Breast epithelium (tissue), 4 donors: ENCODE measurements at regions of chr5 and their contacts with region 1.

Region 1: GRCh38 chr5:96288166-96288844 is 144.7 kb downstream of the PCSK1 start:
- DNase-seq: no peak
- H3K4me3 ChIP-seq: no peak overlapping the region
- H3K27ac ChIP-seq: no peak overlapping the region
- H3K4me1 ChIP-seq: no peaks in the 10 kb centered on the region
- H3K27me3 ChIP-seq: no peaks in the 10 kb centered on the region
- CTCF ChIP-seq: no peak
- POLR2A ChIP-seq: no peak

Region 2: DNA sequence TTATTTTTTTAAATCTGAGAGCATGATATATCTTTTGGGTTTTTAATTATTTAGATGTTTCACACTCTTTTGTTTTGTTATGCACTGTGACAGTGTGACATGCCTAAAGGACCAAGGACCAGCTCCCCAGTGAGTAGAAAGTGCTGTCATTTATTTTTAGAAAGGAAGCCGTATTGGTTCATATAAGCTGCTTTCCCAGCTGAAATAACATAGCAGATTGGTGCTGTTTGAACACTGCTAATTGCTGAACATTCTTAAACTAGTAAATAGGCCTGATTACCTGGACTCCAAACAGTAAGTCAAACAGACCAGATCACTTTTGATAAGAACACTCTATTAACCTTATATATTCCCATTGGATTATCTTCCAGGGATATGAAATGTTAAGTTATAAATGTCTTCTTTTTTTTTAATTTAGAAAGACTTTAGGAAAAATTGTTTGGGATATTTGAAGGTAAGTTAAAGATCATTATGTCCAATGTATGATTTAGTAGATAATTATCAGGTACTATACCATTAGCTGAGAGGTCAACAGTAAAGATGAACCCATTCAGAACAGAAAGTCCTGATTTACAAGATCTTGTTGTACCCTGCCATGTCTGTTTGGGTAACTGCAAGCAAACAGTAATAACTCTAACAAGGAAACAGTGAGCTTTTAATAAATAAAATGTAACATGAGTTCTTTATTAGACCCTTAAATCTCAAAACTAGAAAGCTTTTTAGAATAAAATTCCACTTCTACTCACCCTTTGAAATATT is 298.8 kb before region 1 on chr5:
- intact Hi-C with region 1: loop called (anchors 5 kb)
- DNase-seq: no peak
- H3K4me3 ChIP-seq: no peak overlapping the region
- H3K27ac ChIP-seq: no peak overlapping the region
- H3K4me1 ChIP-seq: no peaks in the 10 kb centered on the region
- H3K27me3 ChIP-seq: no peaks in the 10 kb centered on the region
- CTCF ChIP-seq: no peak
- POLR2A ChIP-seq: no peak

Region 3: DNA sequence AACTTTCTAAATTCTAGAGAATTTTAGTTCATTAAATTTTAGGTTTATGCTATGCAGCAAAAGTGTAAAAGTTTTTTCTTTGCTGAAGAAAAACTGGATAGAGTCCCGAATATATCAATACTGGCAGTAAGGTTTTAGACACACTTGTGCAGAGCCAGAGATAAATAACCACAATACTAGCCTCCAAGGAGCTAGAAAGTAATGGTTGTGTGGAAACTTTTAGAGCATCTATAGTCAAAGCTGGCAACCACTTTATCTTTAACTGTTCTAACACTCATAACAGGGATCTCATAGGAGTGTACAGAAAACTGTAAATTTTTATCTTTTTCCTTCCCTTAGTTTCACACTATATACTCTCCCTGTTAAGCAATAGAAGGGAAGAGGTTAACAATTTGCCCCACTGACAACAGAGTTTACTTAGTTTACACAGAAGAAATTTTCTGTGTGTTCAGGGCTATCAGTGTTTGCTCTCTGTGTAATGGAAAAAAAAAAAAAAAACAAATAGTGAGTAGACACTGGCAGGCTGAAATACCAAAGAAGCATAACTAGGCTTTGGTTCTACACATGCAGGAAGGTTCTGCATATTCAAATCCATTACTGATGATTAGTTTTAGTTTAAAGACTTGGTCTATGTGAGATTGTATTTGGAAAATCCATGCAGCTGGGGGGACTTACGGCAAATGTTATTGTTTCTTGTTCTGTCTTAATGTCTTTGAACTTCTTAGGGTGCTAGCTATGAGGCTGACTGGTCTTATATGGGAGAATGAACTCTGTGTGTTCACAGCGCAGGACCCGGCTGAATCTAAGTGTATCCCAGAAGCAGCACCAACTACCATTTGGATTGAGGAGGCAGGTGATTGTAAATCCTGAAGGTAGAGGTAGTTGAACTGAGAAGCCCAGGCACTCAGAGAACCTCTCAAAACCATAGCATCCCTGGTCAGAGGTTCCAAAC is 42.9 kb before region 1 on chr5:
- intact Hi-C with region 1: no loop called
- DNase-seq: no peak
- H3K4me3 ChIP-seq: no peak overlapping the region
- H3K27ac ChIP-seq: no peak overlapping the region
- H3K4me1 ChIP-seq: no peaks in the 10 kb centered on the region
- H3K27me3 ChIP-seq: no peaks in the 10 kb centered on the region
- CTCF ChIP-seq: no peak
- POLR2A ChIP-seq: no peak